Activated CD4-positive, alpha-beta memory T cell treated with anti-CD3 and anti-CD28 coated beads, Interleukin-2, amount 10 ng/mL, durations not matched to agents 7 days and 5 days (primary cell): ENCODE measurements at regions of chr10 and their contacts with region 1.

Region 1: GRCh38 chr10:92432596-92432995 is 141.3 kb downstream of the IDE start:
- DNase-seq: no peak
- H3K4me3 Mint-ChIP-seq: no peak overlapping the region
- H3K27ac Mint-ChIP-seq: no peak overlapping the region
- H3K4me1 Mint-ChIP-seq: no peaks in the 10 kb centered on the region
- H3K27me3 Mint-ChIP-seq: no peaks in the 10 kb centered on the region

Region 2: GRCh38 chr10:92087750-92088395 is 344.7 kb before region 1 on chr10:
- CTCF ChIA-PET with region 1: interaction called, 36 read pairs
- POLR2A ChIA-PET with region 1: interaction called, 4 read pairs
- DNase-seq: peak; percentile 75
- H3K4me3 Mint-ChIP-seq: no peak overlapping the region
- H3K27ac Mint-ChIP-seq: no peak overlapping the region
- H3K4me1 Mint-ChIP-seq: peaks cover 17% of the 10 kb centered on the region
- H3K27me3 Mint-ChIP-seq: no peaks in the 10 kb centered on the region

Region 3: DNA sequence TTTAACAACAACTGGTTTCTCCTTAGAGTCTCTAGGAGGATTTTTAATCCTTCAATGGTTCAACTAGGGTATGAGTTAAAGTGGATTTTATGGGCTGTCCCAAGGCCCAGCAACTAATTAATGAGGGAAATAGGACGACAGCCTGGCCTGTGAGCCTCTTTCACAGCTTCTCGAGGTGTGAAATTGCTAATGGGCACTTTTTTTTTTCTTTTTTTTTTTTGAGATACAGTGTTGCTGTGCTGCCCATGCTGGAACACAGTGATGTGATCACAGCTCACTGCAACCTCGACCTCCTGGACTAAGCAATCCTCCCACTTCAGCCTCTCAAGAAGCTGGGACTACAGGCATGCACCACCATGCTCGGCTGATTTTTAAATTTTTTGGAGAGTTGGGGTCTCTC is 54.6 kb before region 1 on chr10:
- CTCF ChIA-PET with region 1: no interaction called
- POLR2A ChIA-PET with region 1: no interaction called
- DNase-seq: no peak
- H3K4me3 Mint-ChIP-seq: no peak overlapping the region
- H3K27ac Mint-ChIP-seq: no peak overlapping the region
- H3K4me1 Mint-ChIP-seq: no peaks in the 10 kb centered on the region
- H3K27me3 Mint-ChIP-seq: peaks cover 15% of the 10 kb centered on the region